Esophagus muscularis mucosa (tissue), 4 donors: ENCODE measurements at regions of chr18 and their contacts with region 1.

Region 1: GRCh38 chr18:61635901-61636528 is 256.8 kb downstream of the RNF152 start:
- DNase-seq: no peak
- H3K4me3 ChIP-seq: no peak overlapping the region
- H3K27ac ChIP-seq: no peak overlapping the region
- H3K4me1 ChIP-seq: peaks cover 0 to 5% (median 4%) of the 10 kb centered on the region in 4 donors
- H3K27me3 ChIP-seq: no peaks in the 10 kb centered on the region
- CTCF ChIP-seq: peak in 2 of 3 experiments; percentile 49 to 69
- EP300 ChIP-seq: no peak
- POLR2A ChIP-seq: no peak

Region 2: GRCh38 chr18:61765097-61765496 is 129.1 kb after region 1 on chr18:
- intact Hi-C with region 1: no loop called
- DNase-seq: no peak
- H3K4me3 ChIP-seq: no peak overlapping the region
- H3K27ac ChIP-seq: no peak overlapping the region
- H3K4me1 ChIP-seq: no peaks in the 10 kb centered on the region
- H3K27me3 ChIP-seq: no peaks in the 10 kb centered on the region
- CTCF ChIP-seq: no peak
- EP300 ChIP-seq: no peak
- POLR2A ChIP-seq: no peak

Region 3: GRCh38 chr18:61893971-61894750 is 258.1 kb after region 1 on chr18:
- intact Hi-C with region 1: loop called (anchors 5 kb)
- DNase-seq: peak; percentile 87
- H3K4me3 ChIP-seq: peak overlapping the region; percentile 76 to 95 (median 83)
- H3K27ac ChIP-seq: peak overlapping the region; percentile 72 to 78 (median 76)
- H3K4me1 ChIP-seq: peaks cover 11 to 33% (median 31%) of the 10 kb centered on the region in 4 donors
- H3K27me3 ChIP-seq: peaks cover 0 to 21% (median 0%) of the 10 kb centered on the region in 4 donors
- CTCF ChIP-seq: peak in 2 of 3 experiments; percentile 32 to 34
- EP300 ChIP-seq: no peak
- POLR2A ChIP-seq: no peak